ENCODE measurements at regions of chr7 and their contacts with region 1.

Region 1: GRCh38 chr7:131068604-131069021 is 259.1 kb upstream of the MKLN1 start:
- DNase-seq: no peak
- H3K4me3 Mint-ChIP-seq: no peak overlapping the region
- H3K27ac Mint-ChIP-seq: peak overlapping the region; percentile 14
- H3K4me1 Mint-ChIP-seq: peaks cover 25% of the 10 kb centered on the region
- H3K27me3 Mint-ChIP-seq: no peaks in the 10 kb centered on the region

Region 2: GRCh38 chr7:131424219-131424822 is 355.7 kb after region 1 on chr7:
- intact Hi-C with region 1: loop called (anchors 1 kb)
- DNase-seq: peak; percentile 71
- H3K4me3 Mint-ChIP-seq: no peak overlapping the region
- H3K27ac Mint-ChIP-seq: no peak overlapping the region
- H3K4me1 Mint-ChIP-seq: peaks cover 2% of the 10 kb centered on the region
- H3K27me3 Mint-ChIP-seq: no peaks in the 10 kb centered on the region

Region 3: DNA sequence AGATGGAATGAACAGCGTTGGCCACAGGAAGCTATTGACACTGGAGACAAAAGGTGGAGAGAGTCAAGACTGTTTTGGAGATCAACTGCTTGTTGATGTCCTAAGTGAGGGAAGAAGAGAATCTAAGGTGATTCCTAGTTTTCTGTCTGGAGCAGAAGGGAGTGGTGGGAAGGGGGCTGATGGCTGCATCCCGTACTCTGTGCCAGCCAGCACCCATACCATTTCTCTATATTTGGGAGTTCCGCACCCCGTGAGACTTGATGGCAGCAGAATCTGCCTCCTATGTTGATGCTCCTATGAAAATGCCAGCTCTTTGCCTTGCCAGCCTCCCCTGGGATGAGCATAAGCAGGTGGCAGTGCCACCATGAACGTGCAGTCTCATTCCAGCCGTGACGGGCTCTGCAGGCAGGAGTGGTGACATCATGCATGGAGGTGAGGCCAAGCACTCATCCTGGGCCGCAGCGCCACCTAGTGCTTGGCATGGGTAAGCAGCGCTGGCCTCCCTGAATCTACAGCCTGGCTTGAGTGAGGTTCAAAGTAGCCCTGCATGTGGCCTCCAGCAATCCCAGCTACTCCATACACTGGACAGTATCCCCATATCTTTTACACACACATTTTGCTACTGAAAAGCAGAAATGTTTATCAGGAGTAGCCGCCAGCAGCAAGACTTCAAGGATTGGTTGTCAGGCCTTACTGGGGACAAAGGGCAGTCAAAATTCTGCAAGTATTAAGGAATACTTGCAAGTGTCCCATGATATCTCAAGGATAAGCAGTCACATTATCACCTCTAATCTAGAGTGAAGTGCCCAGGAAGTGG is 444.8 kb after region 1 on chr7:
- intact Hi-C with region 1: loop called (anchors 1 kb)
- DNase-seq: peak; percentile 94
- H3K4me3 Mint-ChIP-seq: peak overlapping the region; percentile 10
- H3K27ac Mint-ChIP-seq: peak overlapping the region; percentile 34
- H3K4me1 Mint-ChIP-seq: peaks cover 15% of the 10 kb centered on the region
- H3K27me3 Mint-ChIP-seq: peaks cover 5% of the 10 kb centered on the region